Activated naive CD8-positive, alpha-beta T cell treated with anti-CD3 and anti-CD28 coated beads, Interleukin-2, amount 10 ng/mL, durations not matched to agents 7 days and 5 days (primary cell): ENCODE measurements at regions of chr18 and their contacts with region 1.

Region 1: GRCh38 chr18:63320046-63320689 is 599 bp upstream of the BCL2 start:
- DNase-seq: peak; percentile 85
- ATAC-seq: peak; percentile 80
- H3K4me3 Mint-ChIP-seq: peak overlapping the region; percentile 89
- H3K27ac Mint-ChIP-seq: peak overlapping the region; percentile 89
- H3K4me1 Mint-ChIP-seq: peaks cover 15% of the 10 kb centered on the region
- H3K27me3 Mint-ChIP-seq: no peaks in the 10 kb centered on the region

Region 2: DNA sequence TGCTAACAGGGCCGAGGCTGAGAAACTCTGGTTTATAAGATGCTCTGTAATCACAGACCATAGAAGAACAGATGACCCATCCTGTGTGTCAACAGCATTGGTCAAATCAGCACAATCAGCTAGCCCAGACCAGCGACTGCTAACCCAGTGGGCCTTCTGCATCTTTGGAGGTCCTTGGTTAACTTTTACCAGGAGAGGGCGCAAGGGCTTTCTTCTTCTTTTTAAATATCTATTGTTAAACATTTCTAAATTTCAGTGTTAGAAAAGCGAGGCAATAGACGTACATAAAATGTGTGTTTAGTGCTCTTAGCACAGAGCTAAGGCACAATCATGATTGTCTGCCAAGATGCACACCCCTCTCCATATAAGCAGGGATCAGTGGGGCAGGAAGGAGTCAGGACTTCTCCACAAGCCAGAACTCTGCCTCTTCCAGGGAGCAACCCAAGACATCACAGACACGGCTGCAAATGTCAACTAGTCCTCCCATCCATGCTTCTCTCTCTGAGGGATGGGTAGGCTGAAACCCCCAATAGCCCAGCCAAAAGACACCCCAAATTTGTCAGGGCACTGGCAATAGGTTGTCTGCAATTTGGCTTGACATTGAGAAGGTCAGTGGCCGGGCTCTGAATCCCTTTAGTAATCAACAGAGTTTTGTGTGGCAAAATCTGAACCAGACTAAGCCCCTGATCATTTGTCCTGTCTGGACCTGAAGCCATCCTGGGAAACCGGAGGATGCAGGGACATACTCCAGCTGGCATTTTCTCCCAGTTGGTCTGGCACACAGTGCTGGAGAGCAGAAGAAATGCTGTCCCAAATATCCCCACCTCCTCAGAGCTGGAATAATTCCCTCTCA is 188.8 kb before region 1 on chr18:
- POLR2A ChIA-PET with region 1: interaction called, 11 read pairs
- DNase-seq: no peak
- ATAC-seq: peak; percentile 55
- H3K4me3 Mint-ChIP-seq: no peak overlapping the region
- H3K27ac Mint-ChIP-seq: peak overlapping the region; percentile 69
- H3K4me1 Mint-ChIP-seq: peaks cover 37% of the 10 kb centered on the region
- H3K27me3 Mint-ChIP-seq: no peaks in the 10 kb centered on the region

Region 3: GRCh38 chr18:63161761-63162195 is 158.4 kb before region 1 on chr18:
- POLR2A ChIA-PET with region 1: interaction called, 28 read pairs
- DNase-seq: peak; percentile 64
- ATAC-seq: peak; percentile 92
- H3K4me3 Mint-ChIP-seq: peak overlapping the region; percentile 81
- H3K27ac Mint-ChIP-seq: peak overlapping the region; percentile 90
- H3K4me1 Mint-ChIP-seq: peaks cover 91% of the 10 kb centered on the region
- H3K27me3 Mint-ChIP-seq: no peaks in the 10 kb centered on the region

Region 4: GRCh38 chr18:63207143-63207790 is 112.9 kb before region 1 on chr18:
- POLR2A ChIA-PET with region 1: interaction called, 124 read pairs
- DNase-seq: peak; percentile 48
- ATAC-seq: peak; percentile 13
- H3K4me3 Mint-ChIP-seq: peak overlapping the region; percentile 96
- H3K27ac Mint-ChIP-seq: peak overlapping the region; percentile 96
- H3K4me1 Mint-ChIP-seq: peaks cover 73% of the 10 kb centered on the region
- H3K27me3 Mint-ChIP-seq: no peaks in the 10 kb centered on the region

Region 5: GRCh38 chr18:63266888-63267790 is 53.0 kb before region 1 on chr18:
- POLR2A ChIA-PET with region 1: interaction called, 10 read pairs
- DNase-seq: no peak
- ATAC-seq: peak; percentile 37
- H3K4me3 Mint-ChIP-seq: peak overlapping the region; percentile 70
- H3K27ac Mint-ChIP-seq: peak overlapping the region; percentile 83
- H3K4me1 Mint-ChIP-seq: peaks cover 51% of the 10 kb centered on the region
- H3K27me3 Mint-ChIP-seq: no peaks in the 10 kb centered on the region

Region 6: GRCh38 chr18:63331105-63331504 is 10.9 kb after region 1 on chr18:
- POLR2A ChIA-PET with region 1: no interaction called
- DNase-seq: no peak
- ATAC-seq: no peak
- H3K4me3 Mint-ChIP-seq: no peak overlapping the region
- H3K27ac Mint-ChIP-seq: no peak overlapping the region
- H3K4me1 Mint-ChIP-seq: no peaks in the 10 kb centered on the region
- H3K27me3 Mint-ChIP-seq: no peaks in the 10 kb centered on the region

Region 7: DNA sequence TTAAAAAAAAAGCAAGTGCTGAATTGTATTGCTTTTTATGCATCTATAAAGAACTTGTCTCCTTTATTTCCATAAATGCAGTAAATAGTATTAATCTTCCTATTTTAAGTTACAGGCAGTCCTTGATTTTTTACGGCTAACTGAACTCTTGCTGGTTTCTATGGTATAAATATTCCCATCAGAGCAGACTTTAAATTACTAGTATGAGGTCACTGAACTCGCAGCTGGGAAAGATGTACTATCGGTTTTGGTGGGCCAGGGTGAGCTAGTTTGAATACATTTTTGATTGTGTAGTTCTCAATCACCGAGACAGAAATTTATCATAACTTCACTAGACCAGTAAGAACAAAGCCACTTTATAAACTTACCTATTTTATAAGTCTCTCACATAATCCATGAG is 67.7 kb after region 1 on chr18:
- POLR2A ChIA-PET with region 1: no interaction called
- DNase-seq: no peak
- ATAC-seq: no peak
- H3K4me3 Mint-ChIP-seq: no peak overlapping the region
- H3K27ac Mint-ChIP-seq: no peak overlapping the region
- H3K4me1 Mint-ChIP-seq: no peaks in the 10 kb centered on the region
- H3K27me3 Mint-ChIP-seq: no peaks in the 10 kb centered on the region